IMR-90 (cell line): ENCODE measurements at regions of chr11 and their contacts with region 1.

Region 1: GRCh38 chr11:120710354-120711131 is 199.0 kb downstream of the GRIK4 start:
- DNase-seq: peak; percentile 87
- ATAC-seq: peak; percentile 94
- H3K4me3 ChIP-seq: no peak overlapping the region
- H3K27ac ChIP-seq: peak overlapping the region; percentile 66; the same call in 1 of the 2 replicates
- H3K4me1 ChIP-seq: peaks cover 11% of the 10 kb centered on the region; the same call in 1 of the 2 replicates
- H3K27me3 ChIP-seq: peaks cover 3% of the 10 kb centered on the region; the same call in 1 of the 2 replicates
- CTCF ChIP-seq: no peak
- POLR2A ChIP-seq: no peak
- RAD21 ChIP-seq: no peak

Region 2: DNA sequence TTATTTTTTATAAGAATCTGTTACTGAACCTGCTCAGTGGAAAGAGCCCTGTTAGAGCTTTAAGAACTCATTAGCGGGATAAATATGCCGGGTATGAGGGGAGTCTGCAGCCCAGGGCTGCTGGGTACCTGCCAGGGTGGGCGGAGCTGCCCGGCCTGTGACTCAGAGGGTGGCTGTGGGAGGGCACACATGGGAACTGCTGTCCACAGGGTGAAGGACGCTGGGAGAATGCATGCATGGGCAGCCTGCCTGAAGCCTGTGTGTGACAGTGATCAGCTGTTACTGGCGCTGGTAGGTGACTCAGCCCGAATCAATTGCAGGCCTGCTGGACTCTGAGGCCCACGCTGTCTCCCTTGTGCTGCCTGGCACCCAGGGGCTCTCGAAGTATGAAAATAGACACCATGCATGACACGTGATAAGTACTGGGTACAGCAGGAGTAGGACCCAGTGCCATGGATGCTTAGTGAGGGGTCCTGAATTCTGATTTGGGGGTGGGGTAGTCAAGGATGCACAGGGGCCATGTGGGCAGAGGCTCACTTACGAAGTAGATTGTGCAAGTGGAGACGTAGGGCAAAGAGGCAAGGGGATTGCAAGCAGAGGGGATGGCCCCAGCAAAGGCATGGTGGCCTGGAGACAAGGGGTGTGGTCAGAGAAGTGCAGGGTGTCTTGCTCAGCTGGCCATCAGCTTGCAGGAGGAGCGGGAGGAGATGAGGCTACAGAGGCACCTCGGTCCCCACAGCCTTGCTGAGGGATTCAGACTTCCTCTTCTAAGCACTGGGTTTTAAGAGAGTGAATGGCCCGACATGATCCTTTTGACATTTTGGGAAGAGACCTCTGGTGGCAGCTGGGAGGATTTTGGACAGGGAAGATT is 162.5 kb before region 1 on chr11:
- CTCF ChIA-PET with region 1: no interaction called
- POLR2A ChIA-PET with region 1: no interaction called
- dilution Hi-C with region 1: no loop called
- in situ Hi-C with region 1: no loop called
- intact Hi-C with region 1: loop called (anchors 10 kb)
- DNase-seq: peak; percentile 98
- ATAC-seq: peak; percentile 74
- H3K4me3 ChIP-seq: no peak overlapping the region
- H3K27ac ChIP-seq: peak overlapping the region; percentile 66
- H3K4me1 ChIP-seq: peaks cover 23% of the 10 kb centered on the region
- H3K27me3 ChIP-seq: no peaks in the 10 kb centered on the region
- CTCF ChIP-seq: no peak
- POLR2A ChIP-seq: no peak
- RAD21 ChIP-seq: peak; percentile 17

Region 3: DNA sequence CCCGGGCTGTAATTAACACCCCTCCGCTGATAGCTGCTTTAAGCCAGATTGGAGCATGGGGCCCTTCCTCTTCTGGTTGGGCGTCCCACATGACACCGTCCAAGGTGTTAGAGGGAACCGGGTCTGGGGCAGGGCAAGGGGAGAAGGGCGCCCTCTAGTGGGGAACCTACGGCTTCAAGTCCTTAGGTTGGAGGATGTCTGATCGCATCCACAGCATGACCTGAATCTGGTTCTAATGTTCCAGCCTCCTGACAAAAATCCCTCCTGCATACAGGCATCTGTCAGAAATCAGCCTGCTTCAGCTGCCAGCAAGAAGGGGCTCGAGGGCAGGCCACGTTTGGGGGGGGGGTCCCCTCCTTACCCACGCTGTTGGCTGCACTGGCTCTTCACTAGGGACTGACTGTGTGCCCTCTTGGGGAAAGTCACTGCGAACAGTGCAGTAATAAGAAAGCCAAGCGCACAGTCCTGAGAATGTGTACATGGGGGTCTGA is 219.2 kb after region 1 on chr11:
- CTCF ChIA-PET with region 1: no interaction called
- POLR2A ChIA-PET with region 1: no interaction called
- dilution Hi-C with region 1: no loop called
- in situ Hi-C with region 1: no loop called
- intact Hi-C with region 1: loop called (anchors 10 kb)
- DNase-seq: peak; percentile 26
- ATAC-seq: peak; percentile 65; the same call in 1 of the 2 replicates
- H3K4me3 ChIP-seq: no peak overlapping the region
- H3K27ac ChIP-seq: no peak overlapping the region
- H3K4me1 ChIP-seq: no peaks in the 10 kb centered on the region
- H3K27me3 ChIP-seq: peaks cover 4% of the 10 kb centered on the region; the same call in 1 of the 2 replicates
- CTCF ChIP-seq: peak; percentile 47
- POLR2A ChIP-seq: no peak
- RAD21 ChIP-seq: peak; percentile 48